Activated CD4-positive, alpha-beta T cell treated with anti-CD3 and anti-CD28 coated beads, Interleukin-2, amount 10 ng/mL, durations not matched to agents 24 days and 14 days (primary cell): ENCODE measurements at regions of chr9 and their contacts with region 1.

Region 1: GRCh38 chr9:125631391-125632085 is 75.5 kb downstream of the MAPKAP1 start:
- DNase-seq: peak; percentile 78
- H3K4me3 Mint-ChIP-seq: peak overlapping the region; percentile 51
- H3K27ac Mint-ChIP-seq: peak overlapping the region; percentile 45
- H3K4me1 Mint-ChIP-seq: peaks cover 52% of the 10 kb centered on the region
- H3K27me3 Mint-ChIP-seq: no peaks in the 10 kb centered on the region

Region 2: DNA sequence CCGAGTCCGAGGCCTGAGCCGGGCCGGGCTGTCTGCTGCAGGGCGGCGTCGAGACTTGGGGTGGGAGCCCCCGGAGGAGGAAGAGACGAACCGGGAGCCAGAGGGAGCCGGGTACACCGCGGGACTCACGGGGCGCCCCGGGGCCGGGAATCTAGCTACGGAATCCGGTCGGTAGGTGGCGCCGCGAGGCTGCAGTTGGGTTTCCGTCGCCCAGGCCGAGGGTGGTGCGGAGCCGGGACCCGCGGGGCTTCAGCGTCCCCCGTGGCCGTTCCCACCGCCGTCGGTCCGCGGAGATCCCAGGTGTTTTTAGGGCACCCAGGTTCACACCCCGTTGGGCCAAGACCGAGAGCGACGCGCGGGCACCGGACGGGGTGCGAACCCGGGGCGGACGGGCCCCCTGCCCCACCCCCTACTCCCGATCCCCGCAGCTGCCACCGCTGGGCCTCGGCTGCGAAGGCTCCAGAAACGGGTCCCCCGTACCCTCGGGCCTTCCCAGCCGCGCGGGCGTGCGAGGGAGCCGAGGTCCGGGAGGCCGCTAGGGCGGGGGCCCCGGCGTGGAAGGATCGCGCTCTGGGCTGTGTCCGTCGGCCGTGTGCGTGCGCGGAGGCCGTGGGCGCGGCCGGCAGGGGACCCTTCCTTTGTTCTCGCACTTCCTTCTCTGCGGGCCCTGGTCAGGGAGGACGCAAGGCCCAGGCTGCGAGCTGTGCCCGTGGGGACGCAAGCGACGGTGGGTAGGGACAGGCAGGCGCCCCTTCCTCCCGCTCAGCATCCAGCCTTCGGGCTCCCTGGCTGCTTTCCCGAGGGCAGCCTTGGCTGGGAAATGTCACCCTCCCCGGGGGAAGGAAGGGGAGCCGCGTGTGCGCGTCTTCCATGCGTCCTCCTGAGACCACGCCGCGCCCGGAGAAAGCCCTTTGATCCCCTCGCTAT is 223.3 kb before region 1 on chr9:
- intact Hi-C with region 1: loop called (anchors 1 kb)
- DNase-seq: peak; percentile 93
- H3K4me3 Mint-ChIP-seq: peak overlapping the region; percentile 80
- H3K27ac Mint-ChIP-seq: no peak overlapping the region
- H3K4me1 Mint-ChIP-seq: peaks cover 10% of the 10 kb centered on the region
- H3K27me3 Mint-ChIP-seq: peaks cover 14% of the 10 kb centered on the region

Region 3: GRCh38 chr9:125521462-125522327 is 109.8 kb before region 1 on chr9:
- intact Hi-C with region 1: loop called (anchors 1 kb)
- DNase-seq: peak; percentile 84
- H3K4me3 Mint-ChIP-seq: peak overlapping the region; percentile 78
- H3K27ac Mint-ChIP-seq: peak overlapping the region; percentile 95
- H3K4me1 Mint-ChIP-seq: peaks cover 41% of the 10 kb centered on the region
- H3K27me3 Mint-ChIP-seq: no peaks in the 10 kb centered on the region

Region 4: DNA sequence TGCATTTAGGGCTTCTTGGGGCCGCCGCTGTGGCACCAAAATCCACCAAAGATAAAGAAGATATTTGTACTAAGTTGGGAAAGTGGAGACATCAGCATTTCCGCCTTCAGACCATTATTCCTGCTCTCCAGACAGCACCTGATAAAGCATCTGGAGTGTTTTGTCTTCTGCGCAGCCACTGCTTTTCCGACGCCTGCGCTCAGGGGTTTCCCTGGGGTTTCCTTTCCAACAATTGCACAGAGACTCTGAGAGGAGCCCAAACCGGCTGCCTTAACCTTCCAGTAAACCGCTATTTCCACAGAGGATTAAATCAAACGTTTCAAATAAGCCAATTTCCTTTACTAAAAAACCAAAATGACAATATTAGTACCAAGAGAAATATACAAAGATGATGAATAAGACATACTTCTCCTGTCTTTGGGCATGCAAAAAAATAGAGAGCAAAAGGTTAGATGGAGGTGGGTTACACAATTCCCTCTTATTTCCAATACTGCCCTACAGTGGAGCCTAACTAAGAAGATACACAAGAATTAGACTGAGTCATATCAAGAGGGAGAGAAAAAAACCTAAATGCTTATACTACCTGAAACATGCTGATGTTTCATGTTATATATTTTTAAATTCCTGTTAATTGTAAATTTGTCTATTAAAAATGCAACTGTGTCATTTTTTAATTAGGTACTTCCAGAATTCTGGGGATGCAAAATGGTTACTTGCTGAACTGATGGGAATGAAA is 22.9 kb before region 1 on chr9:
- intact Hi-C with region 1: loop called (anchors 1 kb)
- DNase-seq: no peak
- H3K4me3 Mint-ChIP-seq: peak overlapping the region; percentile 39
- H3K27ac Mint-ChIP-seq: peak overlapping the region; percentile 54
- H3K4me1 Mint-ChIP-seq: peaks cover 25% of the 10 kb centered on the region
- H3K27me3 Mint-ChIP-seq: no peaks in the 10 kb centered on the region

Region 5: DNA sequence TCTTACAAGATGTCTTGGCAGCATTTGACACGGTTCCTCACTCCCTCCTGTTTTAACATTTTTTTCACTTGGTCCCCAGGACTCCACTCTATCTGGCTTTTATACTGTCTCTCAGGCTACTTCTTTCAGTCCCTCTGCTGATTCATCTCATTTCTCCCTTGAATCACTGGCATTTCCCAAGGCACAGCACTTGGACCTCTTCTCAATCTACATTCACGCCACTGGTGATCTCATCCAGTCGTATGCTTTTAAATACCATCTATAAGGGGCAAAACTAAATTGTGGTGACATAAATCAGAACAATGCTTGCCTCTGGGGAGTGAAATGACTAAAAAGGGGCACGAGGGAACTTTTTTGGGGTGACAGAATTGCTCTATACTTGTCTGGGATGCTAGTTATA is 28.4 kb after region 1 on chr9:
- intact Hi-C with region 1: loop called (anchors 1 kb)
- DNase-seq: no peak
- H3K4me3 Mint-ChIP-seq: no peak overlapping the region
- H3K27ac Mint-ChIP-seq: no peak overlapping the region
- H3K4me1 Mint-ChIP-seq: peaks cover 8% of the 10 kb centered on the region
- H3K27me3 Mint-ChIP-seq: no peaks in the 10 kb centered on the region

Region 6: GRCh38 chr9:125706661-125707471 is 75.3 kb after region 1 on chr9 and contains the start of gene MAPKAP1:
- intact Hi-C with region 1: loop called (anchors 1 kb)
- DNase-seq: peak; percentile 98
- H3K4me3 Mint-ChIP-seq: peak within 1 kb of the TSS; percentile 89
- H3K27ac Mint-ChIP-seq: peak within 1 kb of the TSS; percentile 83
- H3K4me1 Mint-ChIP-seq: peaks cover 35% of the 10 kb centered on the region
- H3K27me3 Mint-ChIP-seq: peaks cover 2% of the 10 kb centered on the region
- total RNA-seq, gene MAPKAP1: 104 and 123 TPM in 2 replicates

Region 7: GRCh38 chr9:125810161-125810560 is 178.6 kb after region 1 on chr9:
- intact Hi-C with region 1: no loop called
- DNase-seq: no peak
- H3K4me3 Mint-ChIP-seq: no peak overlapping the region
- H3K27ac Mint-ChIP-seq: no peak overlapping the region
- H3K4me1 Mint-ChIP-seq: no peaks in the 10 kb centered on the region
- H3K27me3 Mint-ChIP-seq: no peaks in the 10 kb centered on the region

Region 8: GRCh38 chr9:125829743-125830142 is 198.2 kb after region 1 on chr9:
- intact Hi-C with region 1: loop called (anchors 10 kb)
- DNase-seq: peak; percentile 82
- H3K4me3 Mint-ChIP-seq: peak overlapping the region; percentile 79
- H3K27ac Mint-ChIP-seq: peak overlapping the region; percentile 29
- H3K4me1 Mint-ChIP-seq: peaks cover 11% of the 10 kb centered on the region
- H3K27me3 Mint-ChIP-seq: no peaks in the 10 kb centered on the region